ENCODE measurements at regions of chr16 and their contacts with region 1.

Region 1: GRCh38 chr16:69709456-69710084 is 16.8 kb downstream of the NQO1 start:
- DNase-seq: no peak
- ATAC-seq: peak; percentile 47 to 69

Region 2: GRCh38 chr16:69754469-69755310 is 45.1 kb after region 1 on chr16 and contains the start of gene NOB1:
- intact Hi-C with region 1: loop called (anchors 2 to 5 kb)
- DNase-seq: peak; percentile 97
- ATAC-seq: peak; percentile 98 to 99
- total RNA-seq, gene NOB1: 16.5 to 22.8 TPM